WTC11 (cell line): ENCODE measurements at regions of chr1 and their contacts with region 1.

Region 1: GRCh38 chr1:44609412-44609767 is 64.9 kb downstream of the TMEM53 start:
- DNase-seq: peak; percentile 88
- ATAC-seq: peak; percentile 88
- H3K4me3 Mint-ChIP-seq: no peak overlapping the region
- H3K27ac Mint-ChIP-seq: no peak overlapping the region
- H3K4me1 Mint-ChIP-seq: peaks cover 11% of the 10 kb centered on the region
- H3K27me3 Mint-ChIP-seq: no peaks in the 10 kb centered on the region
- CTCF ChIP-seq: peak; percentile 29; the same call in 1 of the 2 replicates

Region 2: DNA sequence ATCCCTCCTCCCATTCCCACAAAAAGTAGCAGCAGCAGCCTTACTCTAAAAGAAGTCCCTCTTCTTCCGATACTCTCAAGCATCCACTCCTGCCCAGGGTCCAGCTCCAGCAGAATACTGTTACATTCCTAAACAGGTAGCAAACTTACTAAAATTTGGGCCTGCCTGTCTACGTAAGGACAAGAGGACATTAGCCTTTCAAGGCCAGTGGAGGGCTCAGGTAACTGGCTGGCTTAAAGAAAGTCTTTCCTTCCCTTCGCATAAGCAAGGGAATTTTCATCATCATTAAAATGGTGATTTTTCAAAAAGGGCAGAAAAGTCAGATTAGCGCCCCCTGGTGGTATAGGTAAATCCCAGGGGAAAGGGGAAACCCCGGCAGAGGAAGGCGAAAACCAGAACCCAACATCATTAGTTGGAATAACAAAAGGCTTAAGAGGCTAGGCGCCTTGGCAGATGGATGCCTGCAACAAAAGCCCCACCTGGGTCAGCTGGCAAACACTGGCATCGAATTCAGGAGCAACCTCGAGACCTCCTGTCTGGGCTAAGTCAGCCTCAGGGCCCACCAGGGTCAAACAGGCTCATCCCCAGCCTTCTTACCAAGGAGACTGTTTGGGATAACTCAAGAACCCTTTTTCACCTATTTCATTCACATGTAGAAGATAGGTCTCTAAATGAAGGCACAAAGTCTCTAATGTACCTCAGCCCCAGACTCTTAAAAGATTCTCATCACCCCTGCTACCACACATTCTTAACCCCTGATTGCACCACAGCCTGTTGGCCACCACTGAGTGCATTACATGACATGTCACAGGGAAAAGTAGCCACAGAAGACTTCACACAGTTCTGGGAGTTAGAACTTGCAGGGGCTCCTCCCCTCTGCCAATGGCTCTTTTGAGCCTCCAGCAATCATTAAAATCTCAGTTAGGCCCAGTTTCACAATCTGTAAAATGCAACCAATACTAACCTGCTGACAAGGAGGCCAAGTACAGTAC is 291.0 kb before region 1 on chr1:
- CTCF ChIA-PET with region 1: interaction called, 14 read pairs
- POLR2A ChIA-PET with region 1: no interaction called
- DNase-seq: peak; percentile 69
- ATAC-seq: peak; percentile 82
- H3K4me3 Mint-ChIP-seq: no peak overlapping the region
- H3K27ac Mint-ChIP-seq: peak overlapping the region; percentile 55; the same call in 1 of the 2 replicates
- H3K4me1 Mint-ChIP-seq: peaks cover 22% of the 10 kb centered on the region
- H3K27me3 Mint-ChIP-seq: no peaks in the 10 kb centered on the region
- CTCF ChIP-seq: peak; percentile 75

Region 3: DNA sequence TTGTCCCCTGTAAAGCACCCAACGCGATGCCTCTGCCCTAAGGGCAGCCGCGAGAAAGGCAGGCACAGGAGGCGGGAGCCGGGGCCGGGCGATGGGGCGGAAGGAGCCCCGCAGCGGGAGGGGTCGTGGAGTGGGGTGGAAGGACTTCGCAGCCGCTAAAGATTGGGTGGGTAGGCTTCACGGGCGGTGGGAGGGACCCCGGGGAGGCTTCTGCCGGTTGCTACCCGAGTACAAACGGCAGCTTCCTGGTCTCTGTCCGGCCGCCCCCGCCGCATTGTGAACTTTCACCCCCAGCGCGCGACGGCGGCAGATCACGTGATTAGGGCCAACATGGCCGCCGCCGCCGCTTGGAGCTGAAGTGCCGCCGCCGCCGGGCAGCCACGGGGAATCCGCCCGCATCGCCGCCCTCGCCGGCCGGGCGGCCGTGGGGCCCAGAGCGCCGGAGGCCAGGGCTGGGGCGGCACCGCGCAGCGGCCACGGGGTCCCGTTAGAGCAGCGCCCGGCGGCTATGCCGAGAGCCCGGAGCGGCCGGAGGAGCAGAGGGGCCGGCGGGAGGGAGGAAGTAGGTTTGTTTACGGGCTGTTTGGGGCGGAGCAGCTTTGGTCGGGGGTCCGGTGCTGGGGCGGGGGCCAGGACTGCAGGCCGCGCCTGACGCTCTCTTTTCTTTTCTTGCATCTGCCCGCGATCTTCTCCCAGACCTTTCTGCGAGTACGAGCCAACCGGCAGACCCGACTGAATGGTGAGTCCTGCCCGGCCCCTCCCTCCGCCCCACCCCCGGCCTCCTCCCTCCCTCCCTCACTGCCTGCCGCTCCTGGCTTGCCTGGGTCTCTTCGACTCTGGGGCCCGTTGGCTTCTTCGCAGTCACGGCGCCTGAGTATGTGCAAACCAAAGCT is 22.5 kb after region 1 on chr1:
- CTCF ChIA-PET with region 1: interaction called, 30 read pairs
- POLR2A ChIA-PET with region 1: interaction called, 3 read pairs
- DNase-seq: peak; percentile 84
- ATAC-seq: peak; percentile 82
- H3K4me3 Mint-ChIP-seq: peak overlapping the region; percentile 83
- H3K27ac Mint-ChIP-seq: peak overlapping the region; percentile 95
- H3K4me1 Mint-ChIP-seq: peaks cover 26% of the 10 kb centered on the region
- H3K27me3 Mint-ChIP-seq: no peaks in the 10 kb centered on the region
- CTCF ChIP-seq: no peak

Region 4: GRCh38 chr1:44674113-44675000 is 65.0 kb after region 1 on chr1 and contains the starts of genes ARMH1 and TMEM53:
- CTCF ChIA-PET with region 1: interaction called, 11 read pairs
- POLR2A ChIA-PET with region 1: no interaction called
- DNase-seq: peak; percentile 99
- ATAC-seq: peak; percentile 94
- H3K4me3 Mint-ChIP-seq: peak within 1 kb of the TSS; percentile 92
- H3K27ac Mint-ChIP-seq: peak within 1 kb of the TSS; percentile 80; the same call in 1 of the 2 replicates
- H3K4me1 Mint-ChIP-seq: peaks cover 23% of the 10 kb centered on the region
- H3K27me3 Mint-ChIP-seq: no peaks in the 10 kb centered on the region
- CTCF ChIP-seq: no peak
- total RNA-seq, gene ARMH1: 0.74 to 1.6 TPM (median 0.78 TPM) in 3 replicates
- total RNA-seq, gene TMEM53: 8.2 to 10.9 TPM (median 10.0 TPM) in 3 replicates

Region 5: DNA sequence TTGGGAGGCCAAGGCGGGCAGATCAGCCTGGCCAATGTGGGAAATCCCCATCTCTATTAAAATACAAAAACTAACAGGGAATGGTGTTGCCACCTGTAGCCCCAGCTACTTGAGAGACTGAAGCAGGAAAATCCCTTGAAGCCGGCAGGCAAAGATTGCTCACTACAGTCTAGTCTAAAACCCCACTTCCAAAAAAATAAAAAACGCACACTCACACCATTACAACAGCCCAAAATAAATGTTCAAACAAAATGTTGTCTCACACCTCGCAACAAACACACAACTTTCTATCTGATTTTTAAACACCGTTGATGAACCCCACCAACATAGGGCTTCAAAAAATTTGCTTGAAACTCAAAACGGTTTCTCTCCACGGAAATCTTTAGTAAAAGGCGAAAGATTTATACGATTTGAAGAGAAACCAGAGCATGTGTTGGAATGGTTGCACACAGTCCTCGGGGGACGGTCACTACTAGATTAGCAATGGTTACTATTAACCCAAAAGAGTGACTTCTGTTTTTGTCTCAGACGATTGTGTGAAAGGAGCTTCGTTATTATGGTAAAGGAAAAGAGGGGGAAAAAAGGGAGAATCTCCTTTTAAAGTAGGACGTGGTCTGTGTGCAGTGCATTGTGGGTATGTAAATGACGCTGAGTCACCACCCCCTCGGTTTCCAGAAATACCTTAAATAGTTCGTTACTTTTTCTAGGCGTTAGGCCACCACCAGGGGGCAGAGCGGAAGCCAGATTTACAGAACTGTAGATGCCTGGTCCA is 121.5 kb after region 1 on chr1 and contains the start of gene RNU5D-1:
- CTCF ChIA-PET with region 1: no interaction called
- POLR2A ChIA-PET with region 1: no interaction called
- DNase-seq: peak; percentile 93
- ATAC-seq: peak; percentile 79
- H3K4me3 Mint-ChIP-seq: peak within 1 kb of the TSS; percentile 25
- H3K27ac Mint-ChIP-seq: peak within 1 kb of the TSS; percentile 100
- H3K4me1 Mint-ChIP-seq: peaks cover 22% of the 10 kb centered on the region
- H3K27me3 Mint-ChIP-seq: no peaks in the 10 kb centered on the region
- CTCF ChIP-seq: peak; percentile 81
- total RNA-seq, gene RNU5D-1: not detected in 3 replicates